CD4-positive, alpha-beta T cell (primary cell): ENCODE measurements at regions of chr5 and their contacts with region 1.

Region 1: DNA sequence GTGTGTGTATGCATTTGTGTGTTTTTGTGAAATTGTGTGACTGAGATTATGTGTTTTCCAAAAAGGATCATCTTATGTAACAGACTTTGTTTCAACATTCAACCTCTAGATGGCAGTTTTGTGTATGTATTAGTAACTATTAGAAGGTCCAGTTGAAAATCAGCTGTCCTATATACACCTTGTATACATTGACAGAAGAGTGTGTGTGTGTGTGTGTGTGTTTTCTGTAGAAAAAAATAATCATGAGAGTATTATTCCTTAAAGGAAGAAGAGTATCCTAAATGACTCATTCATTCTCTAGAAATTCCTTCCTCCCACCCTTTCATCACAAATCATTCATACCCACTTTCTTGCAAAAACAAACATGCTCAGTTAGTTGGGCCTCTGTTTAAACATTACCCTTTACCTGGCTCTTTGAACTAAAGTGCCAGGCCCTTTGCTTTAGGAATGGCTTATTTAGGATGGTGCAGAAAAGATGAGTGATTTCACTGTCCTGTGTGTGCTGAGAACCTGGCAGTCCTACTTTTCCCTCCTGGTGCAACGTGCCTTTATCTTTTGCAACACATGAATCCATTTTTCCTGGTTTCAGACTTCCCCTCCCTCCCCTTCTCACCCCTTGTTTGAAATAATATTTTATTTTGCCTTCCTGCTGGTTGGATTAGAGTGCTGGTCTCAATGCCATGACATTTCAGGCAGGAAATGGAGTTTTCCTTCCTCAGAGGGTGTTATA is 152.2 kb downstream of the ARHGAP26 start:
- DNase-seq: peak in 3 of 14 experiments; percentile 49 to 61 (median 50)
- ATAC-seq: no peak
- H3K4me3 ChIP-seq: no peak overlapping the region
- H3K4me3 Mint-ChIP-seq: no peak overlapping the region
- H3K27ac ChIP-seq: no peak overlapping the region
- H3K27ac Mint-ChIP-seq: no peak overlapping the region
- H3K4me1 ChIP-seq: no peaks in the 10 kb centered on the region
- H3K4me1 Mint-ChIP-seq: peaks cover 22% of the 10 kb centered on the region
- H3K27me3 ChIP-seq: no peaks in the 10 kb centered on the region
- H3K27me3 Mint-ChIP-seq: no peaks in the 10 kb centered on the region
- CTCF ChIP-seq: peak; percentile 50

Region 2: GRCh38 chr5:143002459-143003328 is 80.3 kb after region 1 on chr5:
- CTCF ChIA-PET with region 1: interaction called, 16 read pairs
- POLR2A ChIA-PET with region 1: interaction called, 7 read pairs
- intact Hi-C with region 1: loop called in 1 of 2 experiments (anchors 10 kb)
- DNase-seq: peak in 13 of 14 experiments; percentile 10 to 91 (median 37)
- ATAC-seq: peak; percentile 83
- H3K4me3 ChIP-seq: peak overlapping the region; percentile 3
- H3K4me3 Mint-ChIP-seq: peak overlapping the region; percentile 55
- H3K27ac ChIP-seq: peak overlapping the region; percentile 76 to 87
- H3K27ac Mint-ChIP-seq: peak overlapping the region; percentile 91
- H3K4me1 ChIP-seq: peaks cover 33% of the 10 kb centered on the region
- H3K4me1 Mint-ChIP-seq: peaks cover 48% of the 10 kb centered on the region
- H3K27me3 ChIP-seq: no peaks in the 10 kb centered on the region
- H3K27me3 Mint-ChIP-seq: no peaks in the 10 kb centered on the region
- CTCF ChIP-seq: peak; percentile 73

Region 3: GRCh38 chr5:143016777-143017516 is 94.6 kb after region 1 on chr5:
- CTCF ChIA-PET with region 1: no interaction called
- POLR2A ChIA-PET with region 1: no interaction called
- intact Hi-C with region 1: loop called in 1 of 2 experiments (anchors 5 kb)
- DNase-seq: peak in 10 of 14 experiments; percentile 14 to 68 (median 38)
- ATAC-seq: peak; percentile 34
- H3K4me3 ChIP-seq: no peak overlapping the region
- H3K4me3 Mint-ChIP-seq: no peak overlapping the region
- H3K27ac ChIP-seq: no peak overlapping the region
- H3K27ac Mint-ChIP-seq: no peak overlapping the region
- H3K4me1 ChIP-seq: no peaks in the 10 kb centered on the region
- H3K4me1 Mint-ChIP-seq: peaks cover 5% of the 10 kb centered on the region
- H3K27me3 ChIP-seq: no peaks in the 10 kb centered on the region
- H3K27me3 Mint-ChIP-seq: no peaks in the 10 kb centered on the region
- CTCF ChIP-seq: peak; percentile 17

Region 4: DNA sequence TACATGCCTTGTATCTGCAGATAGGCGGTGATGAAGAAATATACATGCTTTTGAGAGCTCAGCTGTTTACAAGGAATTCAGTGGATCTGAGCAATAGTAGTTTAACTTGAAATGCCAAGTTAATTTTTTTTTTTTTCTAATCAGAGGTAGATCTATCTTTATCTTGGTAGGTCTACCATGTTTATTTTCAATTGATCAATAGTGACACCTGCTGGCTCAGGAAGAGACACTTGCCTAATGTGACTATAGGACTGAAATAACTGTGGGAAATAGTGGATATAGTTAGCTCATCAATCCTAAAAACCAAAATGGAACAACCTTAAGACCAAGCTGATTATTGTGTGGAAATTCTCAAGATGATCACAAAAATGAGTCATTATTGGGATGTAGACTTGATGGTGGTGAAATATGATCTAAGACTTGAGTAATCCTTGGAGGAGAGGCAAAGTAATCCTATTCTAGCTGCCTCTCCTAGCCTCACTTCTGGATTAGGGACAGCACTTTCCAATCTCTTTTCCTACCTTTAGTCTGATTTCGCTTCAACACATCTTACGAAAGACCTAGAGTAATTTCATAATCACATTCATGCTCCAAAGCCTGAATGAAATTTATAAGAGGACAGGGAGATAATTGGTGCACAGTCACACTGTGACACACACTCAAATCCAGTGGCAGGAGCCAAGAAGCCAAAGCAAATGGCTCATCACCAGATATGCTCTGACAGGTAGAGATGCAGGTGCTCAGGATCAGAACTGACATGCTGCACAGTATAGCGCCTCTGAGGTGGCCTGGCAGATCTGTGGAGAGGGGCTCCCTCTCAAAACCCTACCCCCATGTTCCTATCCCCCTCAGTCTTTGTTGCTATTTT is 1045.9 kb after region 1 on chr5:
- CTCF ChIA-PET with region 1: no interaction called
- POLR2A ChIA-PET with region 1: no interaction called
- intact Hi-C with region 1: loop called in 1 of 2 experiments (anchors 5 kb)
- DNase-seq: peak in 4 of 14 experiments; percentile 5 to 52 (median 47)
- ATAC-seq: no peak
- H3K4me3 ChIP-seq: no peak overlapping the region
- H3K4me3 Mint-ChIP-seq: no peak overlapping the region
- H3K27ac ChIP-seq: no peak overlapping the region
- H3K27ac Mint-ChIP-seq: no peak overlapping the region
- H3K4me1 ChIP-seq: no peaks in the 10 kb centered on the region
- H3K4me1 Mint-ChIP-seq: no peaks in the 10 kb centered on the region
- H3K27me3 ChIP-seq: no peaks in the 10 kb centered on the region
- H3K27me3 Mint-ChIP-seq: peaks cover 7% of the 10 kb centered on the region
- CTCF ChIP-seq: peak; percentile 60